PC-9 (cell line): ENCODE measurements at regions of chrX and their contacts with region 1.

Region 1: DNA sequence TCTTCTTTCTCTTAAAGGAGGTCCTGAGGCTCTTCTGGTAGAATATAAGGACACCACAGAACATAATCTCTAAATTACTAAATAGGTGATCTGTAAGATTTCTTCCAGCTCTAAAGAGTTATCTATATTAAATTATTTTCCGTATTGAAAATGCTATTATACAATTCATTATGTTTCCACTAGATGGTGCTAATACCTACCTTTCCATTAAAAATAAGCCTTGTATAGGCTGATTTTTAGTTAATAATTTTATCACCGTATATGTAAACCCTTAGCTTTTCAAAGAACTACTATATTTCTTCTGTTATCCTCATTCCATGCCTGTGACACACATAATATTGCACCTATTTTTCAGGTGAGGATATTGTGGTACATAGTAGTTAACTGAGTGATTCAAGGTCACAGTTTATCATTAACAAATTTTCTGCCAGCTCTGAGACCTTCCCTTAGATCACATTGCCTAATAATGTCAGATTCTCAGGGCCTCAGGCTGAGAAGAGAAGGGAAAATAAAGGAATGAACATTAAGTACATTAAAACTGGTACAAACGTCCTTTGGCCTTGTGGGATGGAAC is 138.8 kb downstream of the TEX11 start:
- DNase-seq: no peak
- H3K4me3 ChIP-seq: no peak overlapping the region
- H3K27ac ChIP-seq: no peak overlapping the region
- H3K4me1 ChIP-seq: no peaks in the 10 kb centered on the region
- H3K27me3 ChIP-seq: no peaks in the 10 kb centered on the region; the same call in 1 of the 2 replicates
- CTCF ChIP-seq: peak; percentile 70

Region 2: DNA sequence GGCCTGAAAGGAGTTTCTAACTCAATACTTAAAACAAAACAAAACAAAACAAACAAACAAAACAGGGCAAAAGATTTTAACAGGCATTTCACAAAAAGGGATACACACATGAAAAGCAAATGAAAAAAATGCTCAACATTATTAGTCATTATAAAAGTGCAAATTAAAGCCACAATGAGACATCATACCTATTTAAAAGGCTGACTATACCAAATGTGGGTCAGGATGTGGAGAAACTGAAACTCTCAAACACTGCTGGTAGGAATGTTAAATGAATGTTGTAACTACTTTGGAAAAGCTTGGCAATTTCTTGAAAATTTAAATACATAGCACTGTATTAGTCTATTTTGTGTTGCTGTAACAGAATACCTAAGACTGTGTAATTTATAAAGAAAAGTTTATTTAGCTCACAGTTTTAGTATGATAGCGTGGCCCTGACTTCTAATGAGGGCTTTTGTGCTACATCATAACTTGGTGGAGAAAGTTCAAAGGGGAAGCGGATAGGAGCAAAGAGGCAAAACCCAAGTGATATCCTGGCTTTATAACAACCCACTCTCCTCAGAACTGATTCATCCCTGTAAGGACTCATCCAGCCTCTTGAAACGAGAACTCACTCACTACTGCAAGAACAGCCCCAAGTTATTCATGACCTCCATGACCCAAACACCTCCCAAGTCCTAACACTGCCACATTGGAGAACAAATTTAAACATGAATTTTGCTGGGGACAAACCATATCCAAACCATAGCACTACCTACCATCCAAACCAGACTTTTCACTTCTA is 75.2 kb before region 1 on chrX:
- CTCF ChIA-PET with region 1: no interaction called
- POLR2A ChIA-PET with region 1: no interaction called
- intact Hi-C with region 1: no loop called
- DNase-seq: no peak
- H3K4me3 ChIP-seq: no peak overlapping the region
- H3K27ac ChIP-seq: no peak overlapping the region
- H3K4me1 ChIP-seq: no peaks in the 10 kb centered on the region
- H3K27me3 ChIP-seq: no peaks in the 10 kb centered on the region
- CTCF ChIP-seq: no peak

Region 3: DNA sequence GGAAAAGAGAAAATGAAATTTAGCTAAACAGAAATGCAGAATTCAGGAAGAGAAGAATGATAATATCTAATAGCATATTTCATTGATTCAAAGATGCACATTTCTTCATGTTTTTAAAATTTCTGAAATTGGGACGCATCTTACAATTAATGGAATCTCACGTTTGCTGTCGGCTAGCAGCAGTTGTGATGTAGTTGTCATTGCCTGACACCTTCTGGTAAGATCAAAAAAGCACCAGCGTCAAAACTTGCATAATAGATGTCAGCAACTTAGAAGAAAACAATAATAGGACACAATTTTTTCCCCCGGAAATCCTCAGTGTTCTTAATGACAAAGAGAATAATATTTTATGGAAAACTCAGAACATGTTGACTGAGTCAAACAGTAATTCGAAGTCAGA is 191.0 kb after region 1 on chrX:
- CTCF ChIA-PET with region 1: no interaction called
- POLR2A ChIA-PET with region 1: no interaction called
- intact Hi-C with region 1: loop called (anchors 5 kb)
- DNase-seq: no peak
- H3K4me3 ChIP-seq: no peak overlapping the region
- H3K27ac ChIP-seq: no peak overlapping the region
- H3K4me1 ChIP-seq: no peaks in the 10 kb centered on the region
- H3K27me3 ChIP-seq: peaks cover 20% of the 10 kb centered on the region
- CTCF ChIP-seq: no peak; the same call in 1 of the 2 replicates

Region 4: DNA sequence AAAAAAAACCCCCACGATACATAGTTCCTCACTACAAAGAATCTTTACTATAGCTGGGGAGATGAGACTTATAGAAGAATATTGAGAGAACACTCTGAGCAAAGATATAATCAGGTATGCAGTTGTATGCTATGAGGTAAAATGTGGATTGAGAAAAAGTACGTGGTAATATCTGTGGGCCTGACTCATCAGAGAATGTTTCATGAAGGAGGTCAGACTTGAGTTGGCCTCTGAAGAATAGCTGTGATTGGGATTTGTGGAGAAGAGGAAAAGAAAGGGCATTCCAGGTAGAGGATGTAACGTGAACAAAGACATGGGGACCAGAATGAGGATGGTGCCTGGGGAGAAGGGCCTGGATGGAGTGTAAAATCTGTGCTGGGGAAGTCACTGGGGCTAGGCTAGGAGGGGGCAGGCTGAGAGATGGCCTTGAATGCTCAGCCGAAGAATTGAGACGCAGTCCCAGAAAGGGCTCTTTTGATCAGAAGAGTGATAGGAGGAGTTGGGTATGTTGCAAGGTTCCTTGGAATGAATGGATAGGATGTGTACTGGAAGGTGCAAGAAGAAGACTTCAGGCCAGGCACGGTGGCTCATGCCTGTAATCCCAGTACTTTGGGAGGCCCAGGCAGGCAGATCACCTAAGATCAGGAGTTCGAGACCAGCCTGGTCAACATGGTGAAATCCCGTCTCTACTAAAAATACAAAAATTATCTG is 369.5 kb after region 1 on chrX:
- CTCF ChIA-PET with region 1: no interaction called
- POLR2A ChIA-PET with region 1: interaction called, 10 read pairs
- intact Hi-C with region 1: no loop called
- DNase-seq: no peak
- H3K4me3 ChIP-seq: no peak overlapping the region
- H3K27ac ChIP-seq: no peak overlapping the region
- H3K4me1 ChIP-seq: no peaks in the 10 kb centered on the region
- H3K27me3 ChIP-seq: no peaks in the 10 kb centered on the region
- CTCF ChIP-seq: no peak